Transverse colon (tissue), 4 donors: ENCODE measurements at regions of chr6 and their contacts with region 1.

Region 1: GRCh38 chr6:111989743-111990142 is 64.2 kb upstream of the CCN6 start:
- DNase-seq: no peak
- H3K4me3 ChIP-seq: no peak overlapping the region
- H3K27ac ChIP-seq: no peak overlapping the region
- H3K4me1 ChIP-seq: no peaks in the 10 kb centered on the region
- H3K27me3 ChIP-seq: no peaks in the 10 kb centered on the region
- CTCF ChIP-seq: no peak
- EP300 ChIP-seq: no peak
- POLR2A ChIP-seq: no peak

Region 2: GRCh38 chr6:111702268-111702667 is 287.5 kb before region 1 on chr6:
- in situ Hi-C with region 1: loop called in 2 of 4 experiments (anchors 10 kb)
- intact Hi-C with region 1: loop called (anchors 1 kb)
- DNase-seq: no peak
- H3K4me3 ChIP-seq: no peak overlapping the region
- H3K27ac ChIP-seq: no peak overlapping the region
- H3K4me1 ChIP-seq: peaks cover 0 to 8% (median 8%) of the 10 kb centered on the region in 4 donors
- H3K27me3 ChIP-seq: no peaks in the 10 kb centered on the region
- CTCF ChIP-seq: no peak
- EP300 ChIP-seq: no peak
- POLR2A ChIP-seq: no peak